GM12878 (cell line): ENCODE measurements at regions of chr15 and their contacts with region 1.

Region 1: DNA sequence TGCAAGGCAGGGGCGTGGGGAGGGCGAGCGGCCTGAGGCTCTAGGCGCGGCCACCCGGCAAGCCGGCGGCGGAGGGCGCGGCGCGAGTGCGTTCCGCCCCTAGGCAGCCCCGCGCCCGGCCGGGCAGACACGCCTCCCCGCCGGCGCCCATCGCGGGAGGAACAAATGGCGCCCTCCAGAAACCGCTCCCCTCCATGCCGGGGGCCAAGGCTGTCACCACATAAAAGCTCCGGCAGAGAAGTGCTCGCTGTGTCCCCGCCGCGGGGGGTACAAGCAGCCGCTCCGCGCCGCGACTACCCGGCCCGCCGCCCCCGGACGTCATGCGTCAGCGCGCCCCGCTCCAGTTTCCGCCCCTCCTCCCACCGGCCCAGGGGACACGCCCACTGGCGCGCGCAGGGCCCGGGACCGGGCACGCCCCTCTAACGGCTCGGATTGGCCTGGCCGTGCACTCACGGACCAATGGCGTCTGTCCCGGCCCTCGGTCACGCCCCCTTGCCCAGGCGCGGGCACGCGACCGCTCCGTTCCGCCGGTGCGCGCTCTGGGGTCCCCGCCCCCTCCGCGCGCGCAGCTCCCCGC is 391 bp upstream of the KLF13 start:
- DNase-seq: peak; percentile 92
- ATAC-seq: peak; percentile 78
- H3K4me3 ChIP-seq: peak overlapping the region; percentile 79
- H3K27ac ChIP-seq: peak overlapping the region; percentile 97
- H3K4me1 ChIP-seq: peaks cover 33% of the 10 kb centered on the region
- H3K27me3 ChIP-seq: no peaks in the 10 kb centered on the region
- CTCF ChIP-seq: no peak
- EP300 ChIP-seq: peak in 1 of 2 experiments; percentile 23; a peak in 2 of 4 replicates
- POLR2A ChIP-seq: peak; percentile 75
- RAD21 ChIP-seq: peak; percentile 22; the same call in 1 of the 2 replicates

Region 2: DNA sequence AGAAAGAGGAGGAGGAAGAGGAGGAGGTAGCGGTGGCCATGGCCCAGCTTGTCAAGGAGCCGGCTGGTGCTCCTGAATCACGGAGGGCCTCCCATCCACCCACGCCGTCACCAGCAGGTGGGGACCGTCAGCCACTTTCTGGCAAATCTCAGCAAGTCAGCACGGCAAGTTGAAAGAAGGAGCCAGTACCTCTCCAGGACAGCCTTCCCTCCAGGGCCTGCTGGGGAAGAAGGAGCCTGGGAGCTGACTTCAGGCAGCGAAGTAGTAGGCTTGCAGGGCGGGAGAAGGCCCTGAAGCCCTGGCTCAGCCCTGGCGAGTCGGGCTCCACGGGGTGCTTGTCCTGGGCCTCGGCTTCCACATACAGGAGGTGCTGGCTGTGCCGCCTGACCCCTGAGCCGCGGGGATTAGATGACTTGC is 125.5 kb before region 1 on chr15:
- CTCF ChIA-PET with region 1: interaction called, 5 read pairs
- POLR2A ChIA-PET with region 1: no interaction called
- RAD21 ChIA-PET with region 1: interaction called, 15 read pairs
- SMC1A ChIA-PET with region 1: interaction called, 11 read pairs
- in situ Hi-C with region 1: no loop called
- intact Hi-C with region 1: no loop called
- DNase-seq: no peak
- ATAC-seq: peak; percentile 83
- H3K4me3 ChIP-seq: no peak overlapping the region
- H3K27ac ChIP-seq: no peak overlapping the region
- H3K4me1 ChIP-seq: peaks cover 30% of the 10 kb centered on the region
- H3K27me3 ChIP-seq: no peaks in the 10 kb centered on the region
- CTCF ChIP-seq: peak; percentile 61 to 88 (median 74)
- EP300 ChIP-seq: no peak
- POLR2A ChIP-seq: no peak
- RAD21 ChIP-seq: peak; percentile 79

Region 3: GRCh38 chr15:31236184-31237042 is 89.8 kb before region 1 on chr15:
- CTCF ChIA-PET with region 1: interaction called, 23 read pairs
- POLR2A ChIA-PET with region 1: interaction called, 73 read pairs
- RAD21 ChIA-PET with region 1: interaction called, 68 read pairs
- SMC1A ChIA-PET with region 1: interaction called, 52 read pairs
- in situ Hi-C with region 1: no loop called
- intact Hi-C with region 1: loop called (anchors 1 kb)
- DNase-seq: no peak
- ATAC-seq: peak; percentile 82
- H3K4me3 ChIP-seq: no peak overlapping the region
- H3K27ac ChIP-seq: peak overlapping the region; percentile 92
- H3K4me1 ChIP-seq: peaks cover 44% of the 10 kb centered on the region
- H3K27me3 ChIP-seq: no peaks in the 10 kb centered on the region
- CTCF ChIP-seq: no peak
- EP300 ChIP-seq: peak; percentile 80 to 92
- POLR2A ChIP-seq: no peak
- RAD21 ChIP-seq: no peak

Region 4: DNA sequence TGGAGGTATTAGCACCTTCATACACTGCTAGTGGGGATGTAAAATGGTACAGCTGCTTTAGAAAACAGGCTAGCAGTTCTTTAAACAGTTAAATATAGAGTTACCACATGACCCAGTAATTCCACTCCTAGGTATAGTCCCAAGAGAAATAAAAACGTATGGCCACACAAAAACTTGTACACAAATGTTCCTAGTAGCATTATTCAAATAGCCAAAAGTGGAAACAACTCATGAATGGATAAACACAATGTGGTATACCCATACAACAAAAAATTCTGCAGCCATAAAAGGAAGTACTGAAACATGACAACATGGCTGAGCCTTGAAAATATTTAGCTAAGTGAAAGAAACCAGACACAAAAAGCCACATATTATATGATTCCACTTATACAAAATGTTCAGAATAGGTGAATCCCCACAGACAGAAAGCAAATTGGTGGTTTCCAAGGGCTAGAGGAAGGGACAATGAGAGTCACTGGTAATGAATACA is 40.4 kb before region 1 on chr15:
- CTCF ChIA-PET with region 1: interaction called, 4 read pairs
- POLR2A ChIA-PET with region 1: interaction called, 8 read pairs
- RAD21 ChIA-PET with region 1: interaction called, 21 read pairs
- SMC1A ChIA-PET with region 1: interaction called, 26 read pairs
- in situ Hi-C with region 1: no loop called
- intact Hi-C with region 1: no loop called
- DNase-seq: peak; percentile 49
- ATAC-seq: peak; percentile 95
- H3K4me3 ChIP-seq: no peak overlapping the region
- H3K27ac ChIP-seq: peak overlapping the region; percentile 48
- H3K4me1 ChIP-seq: no peaks in the 10 kb centered on the region
- H3K27me3 ChIP-seq: no peaks in the 10 kb centered on the region
- CTCF ChIP-seq: no peak
- EP300 ChIP-seq: peak in 1 of 2 experiments; percentile 48; a peak in 1 of 4 replicates
- POLR2A ChIP-seq: no peak
- RAD21 ChIP-seq: no peak

Region 5: DNA sequence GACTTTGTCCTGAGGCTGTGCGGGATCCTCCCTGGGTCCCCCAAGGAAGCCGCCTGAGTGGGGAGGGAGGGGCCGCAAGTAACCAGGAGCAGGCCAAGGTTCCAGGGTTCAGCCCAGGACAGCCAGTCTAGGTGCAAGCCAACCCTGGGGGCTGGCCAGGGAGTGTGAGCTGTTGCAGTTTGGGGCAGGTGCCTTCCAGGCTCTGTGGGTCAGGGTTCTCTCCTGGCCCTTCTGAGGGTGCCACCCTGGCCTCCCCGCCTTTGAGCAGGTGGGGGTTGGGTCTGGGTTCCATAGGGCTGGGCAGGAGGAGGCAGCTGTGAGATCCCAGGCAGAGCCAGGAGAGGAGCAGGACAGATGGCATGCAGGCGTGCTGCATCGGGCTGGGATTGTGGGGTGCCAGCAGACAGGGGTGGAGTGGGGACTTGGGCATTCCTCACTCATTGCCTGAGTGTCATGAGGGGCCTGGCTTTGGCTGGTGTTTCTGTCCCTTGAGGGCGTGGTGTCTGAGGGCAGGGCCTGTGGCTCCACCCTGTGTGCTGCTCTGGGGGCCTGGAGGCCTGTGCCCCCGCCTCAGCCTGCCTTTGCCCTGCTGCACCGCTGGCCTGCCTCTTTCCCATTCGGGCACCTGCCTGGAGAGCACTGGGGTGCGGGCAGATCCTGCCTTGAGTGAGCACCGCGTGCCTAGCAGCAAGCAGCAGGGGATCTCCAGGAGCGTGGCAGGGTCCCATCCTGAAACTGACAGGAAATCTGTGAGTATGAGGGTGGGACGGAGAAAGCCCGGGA is 18.8 kb after region 1 on chr15:
- CTCF ChIA-PET with region 1: interaction called, 10 read pairs
- POLR2A ChIA-PET with region 1: interaction called, 10 read pairs
- RAD21 ChIA-PET with region 1: interaction called, 19 read pairs
- SMC1A ChIA-PET with region 1: interaction called, 12 read pairs
- in situ Hi-C with region 1: no loop called
- intact Hi-C with region 1: loop called (anchors 2 kb)
- DNase-seq: no peak
- ATAC-seq: peak; percentile 68
- H3K4me3 ChIP-seq: peak overlapping the region; percentile 80
- H3K27ac ChIP-seq: peak overlapping the region; percentile 96
- H3K4me1 ChIP-seq: peaks cover 87% of the 10 kb centered on the region
- H3K27me3 ChIP-seq: no peaks in the 10 kb centered on the region
- CTCF ChIP-seq: no peak
- EP300 ChIP-seq: no peak
- POLR2A ChIP-seq: peak; percentile 65
- RAD21 ChIP-seq: no peak

Region 6: GRCh38 chr15:31488426-31489204 is 162.4 kb after region 1 on chr15:
- CTCF ChIA-PET with region 1: interaction called, 21 read pairs
- POLR2A ChIA-PET with region 1: no interaction called
- RAD21 ChIA-PET with region 1: interaction called, 10 read pairs
- SMC1A ChIA-PET with region 1: interaction called, 6 read pairs
- in situ Hi-C with region 1: no loop called
- intact Hi-C with region 1: loop called (anchors 1 kb)
- DNase-seq: peak; percentile 78
- ATAC-seq: peak; percentile 73
- H3K4me3 ChIP-seq: no peak overlapping the region
- H3K27ac ChIP-seq: peak overlapping the region; percentile 49
- H3K4me1 ChIP-seq: peaks cover 18% of the 10 kb centered on the region
- H3K27me3 ChIP-seq: no peaks in the 10 kb centered on the region
- CTCF ChIP-seq: peak; percentile 71 to 93 (median 91)
- EP300 ChIP-seq: no peak
- POLR2A ChIP-seq: no peak
- RAD21 ChIP-seq: peak; percentile 84